Caco-2 (cell line): ENCODE measurements at regions of chr2 and their contacts with region 1.

Region 1: GRCh38 chr2:138501425-138502283 is at the start of gene SPOPL:
- DNase-seq: peak; percentile 94 to 97
- H3K4me3 ChIP-seq: peak within 1 kb of the TSS; percentile 89
- H3K4me3 Mint-ChIP-seq: peak within 1 kb of the TSS; percentile 88
- H3K27ac Mint-ChIP-seq: peak within 1 kb of the TSS; percentile 92
- H3K4me1 ChIP-seq: peaks cover 37% of the 10 kb centered on the region
- H3K4me1 Mint-ChIP-seq: peaks cover 14% of the 10 kb centered on the region
- H3K27me3 ChIP-seq: no peaks in the 10 kb centered on the region
- H3K27me3 Mint-ChIP-seq: no peaks in the 10 kb centered on the region
- CTCF ChIP-seq: peak; percentile 10 to 21
- total RNA-seq, gene SPOPL: 31.6 and 32.9 TPM in 2 replicates

Region 2: GRCh38 chr2:138475277-138475776 is 26.3 kb before region 1 on chr2:
- CTCF ChIA-PET with region 1: interaction called, 5 read pairs
- POLR2A ChIA-PET with region 1: interaction called, 3 read pairs
- intact Hi-C with region 1: loop called (anchors 1 kb)
- DNase-seq: no peak
- H3K4me3 ChIP-seq: no peak overlapping the region
- H3K4me3 Mint-ChIP-seq: no peak overlapping the region
- H3K27ac Mint-ChIP-seq: peak overlapping the region; percentile 17
- H3K4me1 ChIP-seq: peaks cover 6% of the 10 kb centered on the region; the same call in 1 of the 2 replicates
- H3K4me1 Mint-ChIP-seq: peaks cover 23% of the 10 kb centered on the region
- H3K27me3 ChIP-seq: no peaks in the 10 kb centered on the region
- H3K27me3 Mint-ChIP-seq: no peaks in the 10 kb centered on the region
- CTCF ChIP-seq: no peak

Region 3: GRCh38 chr2:138516030-138516704 is 14.5 kb after region 1 on chr2:
- CTCF ChIA-PET with region 1: interaction called, 3 read pairs
- POLR2A ChIA-PET with region 1: interaction called, 4 read pairs
- intact Hi-C with region 1: loop called (anchors 2 kb)
- DNase-seq: no peak
- H3K4me3 ChIP-seq: no peak overlapping the region
- H3K4me3 Mint-ChIP-seq: peak overlapping the region; percentile 42
- H3K27ac Mint-ChIP-seq: peak overlapping the region; percentile 62
- H3K4me1 ChIP-seq: peaks cover 35% of the 10 kb centered on the region
- H3K4me1 Mint-ChIP-seq: peaks cover 23% of the 10 kb centered on the region
- H3K27me3 ChIP-seq: no peaks in the 10 kb centered on the region
- H3K27me3 Mint-ChIP-seq: no peaks in the 10 kb centered on the region
- CTCF ChIP-seq: no peak

Region 4: GRCh38 chr2:138559641-138560040 is 58.0 kb after region 1 on chr2:
- CTCF ChIA-PET with region 1: no interaction called
- POLR2A ChIA-PET with region 1: no interaction called
- intact Hi-C with region 1: loop called (anchors 10 kb)
- DNase-seq: no peak
- H3K4me3 ChIP-seq: no peak overlapping the region
- H3K4me3 Mint-ChIP-seq: no peak overlapping the region
- H3K27ac Mint-ChIP-seq: no peak overlapping the region
- H3K4me1 ChIP-seq: no peaks in the 10 kb centered on the region
- H3K4me1 Mint-ChIP-seq: peaks cover 6% of the 10 kb centered on the region
- H3K27me3 ChIP-seq: no peaks in the 10 kb centered on the region
- H3K27me3 Mint-ChIP-seq: no peaks in the 10 kb centered on the region
- CTCF ChIP-seq: no peak